Activated CD4-positive, alpha-beta memory T cell treated with anti-CD3 and anti-CD28 coated beads, Interleukin-2, amount 10 ng/mL, durations not matched to agents 7 days and 5 days (primary cell): ENCODE measurements at regions of chr16 and their contacts with region 1.

Region 1: GRCh38 chr16:24516900-24517669 is 22.3 kb upstream of the RBBP6 start:
- DNase-seq: peak; percentile 78
- H3K4me3 Mint-ChIP-seq: no peak overlapping the region
- H3K27ac Mint-ChIP-seq: no peak overlapping the region
- H3K4me1 Mint-ChIP-seq: peaks cover 11% of the 10 kb centered on the region
- H3K27me3 Mint-ChIP-seq: peaks cover 7% of the 10 kb centered on the region

Region 2: GRCh38 chr16:24528852-24529251 is 11.8 kb after region 1 on chr16:
- CTCF ChIA-PET with region 1: interaction called, 11 read pairs
- POLR2A ChIA-PET with region 1: no interaction called
- DNase-seq: no peak
- H3K4me3 Mint-ChIP-seq: no peak overlapping the region
- H3K27ac Mint-ChIP-seq: no peak overlapping the region
- H3K4me1 Mint-ChIP-seq: peaks cover 13% of the 10 kb centered on the region
- H3K27me3 Mint-ChIP-seq: no peaks in the 10 kb centered on the region